ENCODE measurements at regions of chr6 and their contacts with region 1.

Region 1: DNA sequence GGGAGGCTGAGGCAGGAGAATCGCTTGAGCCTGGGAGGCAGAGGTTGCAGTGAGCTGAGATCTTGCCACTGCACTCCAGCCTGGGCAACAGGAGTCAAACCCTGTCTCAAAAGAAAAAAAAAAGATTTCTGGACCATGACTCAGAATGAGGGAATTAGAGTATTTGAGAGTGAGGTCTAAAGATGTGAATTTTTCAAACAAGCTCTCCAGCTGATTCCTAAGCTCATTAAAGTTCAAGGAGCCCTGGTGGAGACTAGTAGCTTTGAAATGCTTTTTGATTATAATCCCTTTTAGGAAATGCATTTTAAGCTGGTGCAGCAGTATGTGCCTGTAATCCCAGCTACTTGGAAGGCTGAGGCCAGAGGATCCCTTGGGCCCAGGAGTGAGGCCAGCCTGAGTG is 21.8 kb upstream of the SRF start:
- DNase-seq: no peak
- H3K4me3 ChIP-seq: no peak overlapping the region
- H3K27ac ChIP-seq: no peak overlapping the region
- H3K4me1 ChIP-seq: peaks cover 13% of the 10 kb centered on the region
- H3K27me3 ChIP-seq: no peaks in the 10 kb centered on the region
- CTCF ChIP-seq: no peak

Region 2: GRCh38 chr6:42928986-42929820 is 220.1 kb before region 1 on chr6 and contains the start of gene CNPY3:
- CTCF ChIA-PET with region 1: no interaction called
- dilution Hi-C with region 1: loop called (anchors 5 kb)
- in situ Hi-C with region 1: no loop called
- intact Hi-C with region 1: no loop called
- DNase-seq: peak; percentile 98
- H3K4me3 ChIP-seq: peak within 1 kb of the TSS; percentile 64 to 87 (median 78)
- H3K27ac ChIP-seq: peak within 1 kb of the TSS; percentile 72
- H3K4me1 ChIP-seq: peaks cover 14% of the 10 kb centered on the region
- H3K27me3 ChIP-seq: no peaks in the 10 kb centered on the region
- CTCF ChIP-seq: no peak
- total RNA-seq, gene CNPY3: 30.6 to 33.0 TPM

Region 3: GRCh38 chr6:43021270-43022047 is 127.8 kb before region 1 on chr6 and contains the start of gene RRP36:
- CTCF ChIA-PET with region 1: no interaction called
- dilution Hi-C with region 1: loop called (anchors 5 kb)
- in situ Hi-C with region 1: no loop called
- intact Hi-C with region 1: no loop called
- DNase-seq: peak; percentile 63
- H3K4me3 ChIP-seq: peak within 1 kb of the TSS; percentile 89 to 97 (median 90)
- H3K27ac ChIP-seq: peak within 1 kb of the TSS; percentile 52
- H3K4me1 ChIP-seq: peaks cover 7% of the 10 kb centered on the region
- H3K27me3 ChIP-seq: no peaks in the 10 kb centered on the region
- CTCF ChIP-seq: no peak
- total RNA-seq, gene RRP36: 61.0 to 85.0 TPM

Region 4: GRCh38 chr6:43082806-43083655 is 66.2 kb before region 1 on chr6:
- CTCF ChIA-PET with region 1: no interaction called
- dilution Hi-C with region 1: loop called (anchors 5 kb)
- in situ Hi-C with region 1: no loop called
- intact Hi-C with region 1: no loop called
- DNase-seq: no peak
- H3K4me3 ChIP-seq: no peak overlapping the region
- H3K27ac ChIP-seq: no peak overlapping the region
- H3K4me1 ChIP-seq: peaks cover 15% of the 10 kb centered on the region
- H3K27me3 ChIP-seq: no peaks in the 10 kb centered on the region
- CTCF ChIP-seq: no peak

Region 5: GRCh38 chr6:43199912-43200311 is 50.6 kb after region 1 on chr6:
- CTCF ChIA-PET with region 1: no interaction called
- dilution Hi-C with region 1: loop called (anchors 5 kb)
- in situ Hi-C with region 1: no loop called
- intact Hi-C with region 1: no loop called
- DNase-seq: no peak
- H3K4me3 ChIP-seq: no peak overlapping the region
- H3K27ac ChIP-seq: no peak overlapping the region
- H3K4me1 ChIP-seq: no peaks in the 10 kb centered on the region
- H3K27me3 ChIP-seq: no peaks in the 10 kb centered on the region
- CTCF ChIP-seq: no peak

Region 6: GRCh38 chr6:43228951-43229802 is 79.9 kb after region 1 on chr6 and contains the start of gene DNPH1:
- CTCF ChIA-PET with region 1: no interaction called
- dilution Hi-C with region 1: no loop called
- in situ Hi-C with region 1: no loop called
- intact Hi-C with region 1: no loop called
- DNase-seq: peak; percentile 61
- H3K4me3 ChIP-seq: peak within 1 kb of the TSS; percentile 49 to 67 (median 66)
- H3K27ac ChIP-seq: peak within 1 kb of the TSS; percentile 16
- H3K4me1 ChIP-seq: peaks cover 5% of the 10 kb centered on the region
- H3K27me3 ChIP-seq: no peaks in the 10 kb centered on the region
- CTCF ChIP-seq: peak; percentile 51 to 74
- total RNA-seq, gene DNPH1: 55.2 to 56.9 TPM

Region 7: GRCh38 chr6:43391440-43392031 is 242.3 kb after region 1 on chr6:
- CTCF ChIA-PET with region 1: no interaction called
- dilution Hi-C with region 1: no loop called
- in situ Hi-C with region 1: no loop called
- intact Hi-C with region 1: no loop called
- DNase-seq: no peak
- H3K4me3 ChIP-seq: no peak overlapping the region
- H3K27ac ChIP-seq: no peak overlapping the region
- H3K4me1 ChIP-seq: peaks cover 8% of the 10 kb centered on the region
- H3K27me3 ChIP-seq: no peaks in the 10 kb centered on the region
- CTCF ChIP-seq: no peak

Measured in mammary epithelial cell (primary cell).